Heart left ventricle (tissue), 16 donors: ENCODE measurements at regions of chr11 and their contacts with region 1.

Region 1: DNA sequence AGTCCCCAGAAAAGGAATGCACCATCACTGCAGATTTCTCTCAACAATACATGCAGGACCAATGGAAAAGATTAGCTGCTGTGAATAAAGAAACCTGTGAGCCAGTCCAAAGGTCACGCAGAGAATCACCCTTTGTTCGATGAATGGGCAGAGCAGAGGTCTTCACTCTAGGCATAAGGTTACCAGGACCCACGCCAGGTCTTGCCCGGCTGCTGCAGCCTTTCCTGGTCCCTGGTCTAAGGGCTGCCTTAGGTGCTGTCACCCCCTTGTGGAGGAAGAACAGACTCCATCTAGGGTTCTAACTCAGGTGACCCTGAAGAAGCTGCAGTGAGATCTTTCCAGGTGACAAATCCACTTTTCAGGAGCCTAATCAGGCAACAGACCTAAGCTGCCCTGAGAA is 29.0 kb upstream of the NAP1L4 start:
- DNase-seq: no peak
- ATAC-seq: peak; percentile 41 to 68 (median 62)
- H3K4me3 ChIP-seq: no peak overlapping the region
- H3K27ac ChIP-seq: no peak overlapping the region
- H3K4me1 ChIP-seq: peaks cover 0 to 33% (median 0%) of the 10 kb centered on the region in 12 donors
- H3K27me3 ChIP-seq: no peaks in the 10 kb centered on the region
- CTCF ChIP-seq: peak; percentile 21 to 59 (median 40)
- POLR2A ChIP-seq: no peak

Region 2: GRCh38 chr11:2975594-2975993 is 45.5 kb before region 1 on chr11:
- intact Hi-C with region 1: loop called in 3 of 10 experiments (anchors 5 to 10 kb)
- DNase-seq: peak in 1 of 5 donors; percentile 22
- ATAC-seq: peak; percentile 60 to 87 (median 78)
- H3K4me3 ChIP-seq: no peak overlapping the region
- H3K27ac ChIP-seq: no peak overlapping the region
- H3K4me1 ChIP-seq: peaks cover 0 to 28% (median 10%) of the 10 kb centered on the region in 12 donors
- H3K27me3 ChIP-seq: no peaks in the 10 kb centered on the region
- CTCF ChIP-seq: peak in 11 of 12 donors; percentile 24 to 54 (median 42)
- POLR2A ChIP-seq: no peak

Region 3: GRCh38 chr11:3359092-3359824 is 338.1 kb after region 1 on chr11:
- intact Hi-C with region 1: loop called in 1 of 10 experiments (anchors 10 kb)
- DNase-seq: no peak
- ATAC-seq: no peak
- H3K4me3 ChIP-seq: no peak overlapping the region
- H3K27ac ChIP-seq: no peak overlapping the region
- H3K4me1 ChIP-seq: no peaks in the 10 kb centered on the region
- H3K27me3 ChIP-seq: no peaks in the 10 kb centered on the region
- CTCF ChIP-seq: no peak
- POLR2A ChIP-seq: no peak